ENCODE measurements at regions of chr15 and their contacts with region 1.

Region 1: DNA sequence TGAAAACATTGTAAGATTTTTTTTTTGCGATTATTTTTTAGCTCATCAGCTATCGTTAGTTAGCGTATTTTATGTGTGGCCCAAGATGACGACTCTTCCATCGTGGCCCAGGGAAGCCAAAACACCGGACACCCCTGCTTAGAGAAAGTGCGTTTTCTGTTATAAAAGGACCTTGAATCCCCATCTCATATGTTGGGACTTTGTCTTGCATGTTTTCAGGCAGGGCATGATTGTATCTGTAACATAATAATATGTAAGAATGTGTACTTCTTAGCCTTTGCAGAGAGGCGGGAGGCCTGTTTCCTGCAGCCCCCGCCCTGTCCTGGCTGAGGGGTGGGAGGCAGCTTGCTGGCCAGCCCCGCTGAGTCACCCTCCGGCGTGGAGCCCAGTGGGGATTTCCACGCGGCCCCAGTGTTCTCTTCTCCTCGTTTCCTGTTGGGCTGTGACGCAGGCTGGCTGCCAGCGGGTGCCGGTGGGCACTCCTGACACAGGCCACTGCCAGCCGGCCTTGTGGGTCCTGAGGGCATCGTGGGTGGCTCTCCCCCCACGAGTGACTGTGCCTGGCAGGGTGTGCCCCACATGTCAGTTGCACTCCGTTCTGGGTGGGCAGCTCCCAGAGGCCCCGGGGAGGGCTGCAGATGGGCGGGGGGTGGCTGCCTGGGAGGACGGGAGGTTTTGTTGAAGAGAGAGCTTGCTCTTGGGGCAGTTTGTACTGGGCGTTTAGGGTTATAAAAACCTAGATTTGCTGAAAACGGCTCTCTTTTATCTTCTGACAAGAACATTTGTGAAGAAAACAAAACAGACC is 55.6 kb downstream of the SMAD3 start:
- DNase-seq: peak; percentile 67 to 96 (median 82)
- ATAC-seq: peak; percentile 86
- H3K4me3 ChIP-seq: peak overlapping the region; percentile 51
- H3K4me3 Mint-ChIP-seq: peak overlapping the region; percentile 77
- H3K27ac ChIP-seq: peak overlapping the region; percentile 85 to 96
- H3K27ac Mint-ChIP-seq: peak overlapping the region; percentile 96
- H3K4me1 ChIP-seq: peaks cover 94% of the 10 kb centered on the region
- H3K4me1 Mint-ChIP-seq: peaks cover 90% of the 10 kb centered on the region
- H3K27me3 ChIP-seq: no peaks in the 10 kb centered on the region
- H3K27me3 Mint-ChIP-seq: no peaks in the 10 kb centered on the region
- CTCF ChIP-seq: no peak

Region 2: GRCh38 chr15:67080900-67081431 is 40.1 kb before region 1 on chr15:
- CTCF ChIA-PET with region 1: interaction called, 4 read pairs
- POLR2A ChIA-PET with region 1: interaction called, 28 read pairs
- intact Hi-C with region 1: loop called (anchors 5 kb)
- DNase-seq: peak in 6 of 14 experiments; percentile 23 to 83 (median 66)
- ATAC-seq: peak; percentile 45
- H3K4me3 ChIP-seq: no peak overlapping the region
- H3K4me3 Mint-ChIP-seq: peak overlapping the region; percentile 32
- H3K27ac ChIP-seq: peak overlapping the region; percentile 45 to 72
- H3K27ac Mint-ChIP-seq: peak overlapping the region; percentile 89
- H3K4me1 ChIP-seq: peaks cover 98% of the 10 kb centered on the region
- H3K4me1 Mint-ChIP-seq: peaks cover 96% of the 10 kb centered on the region
- H3K27me3 ChIP-seq: no peaks in the 10 kb centered on the region
- H3K27me3 Mint-ChIP-seq: no peaks in the 10 kb centered on the region
- CTCF ChIP-seq: no peak

Region 3: DNA sequence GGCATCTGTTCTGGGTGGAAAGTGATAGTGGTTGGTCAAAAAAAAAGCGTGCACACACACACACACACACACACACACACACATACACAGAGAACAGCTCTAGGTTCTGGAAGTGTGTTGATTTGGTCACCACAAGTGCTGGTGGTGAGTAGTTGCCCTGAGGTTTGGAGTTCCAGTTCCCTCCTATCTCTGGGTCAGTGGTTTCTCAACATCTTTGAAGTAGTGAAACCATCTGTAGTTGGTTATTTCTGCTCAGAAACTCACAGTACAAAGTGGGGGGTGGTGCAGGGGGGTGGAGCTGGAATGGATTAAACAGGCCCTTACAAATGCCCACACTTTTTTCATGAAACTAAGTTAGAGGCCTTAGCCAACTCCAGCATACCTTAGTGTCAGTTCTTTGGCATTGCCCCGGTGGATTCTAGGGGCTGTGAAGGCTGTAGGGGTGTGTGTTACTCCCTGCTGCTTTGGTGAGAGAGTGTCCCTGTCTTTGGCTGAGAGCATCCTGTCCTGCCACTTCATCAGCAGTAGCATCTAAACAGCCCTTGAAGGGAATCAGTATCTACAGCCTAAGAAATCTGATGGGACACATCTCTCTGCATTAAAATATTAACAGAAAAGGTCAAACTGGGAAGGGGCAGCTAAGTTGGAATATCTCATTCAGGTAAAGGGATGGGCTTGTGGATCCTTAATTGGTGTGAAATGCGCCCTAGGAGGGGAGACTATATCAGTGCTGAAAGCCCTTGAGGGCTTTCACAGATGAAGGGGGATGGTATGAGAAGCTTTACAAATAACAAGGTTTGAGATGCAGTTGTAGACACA is 35.0 kb before region 1 on chr15:
- CTCF ChIA-PET with region 1: interaction called, 4 read pairs
- POLR2A ChIA-PET with region 1: interaction called, 28 read pairs
- intact Hi-C with region 1: loop called (anchors 5 kb)
- DNase-seq: peak in 4 of 14 experiments; percentile 4 to 74 (median 64)
- ATAC-seq: no peak
- H3K4me3 ChIP-seq: no peak overlapping the region
- H3K4me3 Mint-ChIP-seq: peak overlapping the region; percentile 34
- H3K27ac ChIP-seq: no peak overlapping the region
- H3K27ac Mint-ChIP-seq: peak overlapping the region; percentile 89
- H3K4me1 ChIP-seq: peaks cover 100% of the 10 kb centered on the region
- H3K4me1 Mint-ChIP-seq: peaks cover 95% of the 10 kb centered on the region
- H3K27me3 ChIP-seq: no peaks in the 10 kb centered on the region
- H3K27me3 Mint-ChIP-seq: no peaks in the 10 kb centered on the region
- CTCF ChIP-seq: no peak

Region 4: DNA sequence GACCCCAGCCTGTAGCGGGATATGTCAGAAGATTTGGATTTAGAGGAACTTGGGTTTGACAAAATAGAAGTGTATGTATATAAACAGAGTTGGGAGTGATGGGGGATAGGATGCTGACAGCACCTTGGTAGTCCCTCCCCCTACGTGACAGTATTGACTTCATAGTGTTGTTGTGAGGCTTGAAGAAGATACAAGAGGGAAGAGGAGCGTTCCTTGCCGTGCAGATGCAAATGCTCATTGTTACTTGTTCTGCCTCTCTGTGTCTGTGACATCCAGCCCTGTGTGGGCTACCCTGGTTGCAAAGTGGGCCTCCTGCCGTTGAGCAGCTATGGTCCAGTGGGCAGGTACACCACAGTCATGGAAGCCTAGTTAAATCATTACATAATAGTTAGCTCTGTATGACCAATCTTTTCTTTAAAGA is 10.7 kb before region 1 on chr15:
- CTCF ChIA-PET with region 1: no interaction called
- POLR2A ChIA-PET with region 1: interaction called, 14 read pairs
- intact Hi-C with region 1: loop called in 1 of 2 experiments (anchors 2 kb)
- DNase-seq: no peak
- ATAC-seq: peak; percentile 29
- H3K4me3 ChIP-seq: no peak overlapping the region
- H3K4me3 Mint-ChIP-seq: peak overlapping the region; percentile 25
- H3K27ac ChIP-seq: no peak overlapping the region
- H3K27ac Mint-ChIP-seq: peak overlapping the region; percentile 69
- H3K4me1 ChIP-seq: peaks cover 71% of the 10 kb centered on the region
- H3K4me1 Mint-ChIP-seq: peaks cover 30% of the 10 kb centered on the region
- H3K27me3 ChIP-seq: no peaks in the 10 kb centered on the region
- H3K27me3 Mint-ChIP-seq: no peaks in the 10 kb centered on the region
- CTCF ChIP-seq: no peak

Region 5: GRCh38 chr15:67134067-67134838 is 13.2 kb after region 1 on chr15:
- CTCF ChIA-PET with region 1: interaction called, 7 read pairs
- POLR2A ChIA-PET with region 1: interaction called, 17 read pairs
- intact Hi-C with region 1: loop called in 1 of 2 experiments (anchors 1 kb)
- DNase-seq: peak; percentile 50 to 91 (median 58)
- ATAC-seq: peak; percentile 97
- H3K4me3 ChIP-seq: peak overlapping the region; percentile 37
- H3K4me3 Mint-ChIP-seq: peak overlapping the region; percentile 79
- H3K27ac ChIP-seq: peak overlapping the region; percentile 81 to 91
- H3K27ac Mint-ChIP-seq: peak overlapping the region; percentile 96
- H3K4me1 ChIP-seq: peaks cover 92% of the 10 kb centered on the region
- H3K4me1 Mint-ChIP-seq: peaks cover 91% of the 10 kb centered on the region
- H3K27me3 ChIP-seq: no peaks in the 10 kb centered on the region
- H3K27me3 Mint-ChIP-seq: no peaks in the 10 kb centered on the region
- CTCF ChIP-seq: no peak

Measured in CD4-positive, alpha-beta T cell (primary cell).